B cell (primary cell): ENCODE measurements at regions of chr16 and their contacts with region 1.

Region 1: GRCh38 chr16:81831722-81832126 is 52.6 kb downstream of the PLCG2 start:
- DNase-seq: peak; percentile 88
- ATAC-seq: peak; percentile 75
- H3K4me3 ChIP-seq: peak overlapping the region; percentile 38 to 58 (median 49)
- H3K4me3 Mint-ChIP-seq: peak overlapping the region; percentile 85
- H3K27ac ChIP-seq: peak overlapping the region; percentile 73 to 77
- H3K27ac Mint-ChIP-seq: peak overlapping the region; percentile 90
- H3K4me1 ChIP-seq: peaks cover 94 to 100% of the 10 kb centered on the region in 2 donors
- H3K4me1 Mint-ChIP-seq: peaks cover 92% of the 10 kb centered on the region
- H3K27me3 ChIP-seq: no peaks in the 10 kb centered on the region
- H3K27me3 Mint-ChIP-seq: no peaks in the 10 kb centered on the region
- CTCF ChIP-seq: peak; percentile 60

Region 2: DNA sequence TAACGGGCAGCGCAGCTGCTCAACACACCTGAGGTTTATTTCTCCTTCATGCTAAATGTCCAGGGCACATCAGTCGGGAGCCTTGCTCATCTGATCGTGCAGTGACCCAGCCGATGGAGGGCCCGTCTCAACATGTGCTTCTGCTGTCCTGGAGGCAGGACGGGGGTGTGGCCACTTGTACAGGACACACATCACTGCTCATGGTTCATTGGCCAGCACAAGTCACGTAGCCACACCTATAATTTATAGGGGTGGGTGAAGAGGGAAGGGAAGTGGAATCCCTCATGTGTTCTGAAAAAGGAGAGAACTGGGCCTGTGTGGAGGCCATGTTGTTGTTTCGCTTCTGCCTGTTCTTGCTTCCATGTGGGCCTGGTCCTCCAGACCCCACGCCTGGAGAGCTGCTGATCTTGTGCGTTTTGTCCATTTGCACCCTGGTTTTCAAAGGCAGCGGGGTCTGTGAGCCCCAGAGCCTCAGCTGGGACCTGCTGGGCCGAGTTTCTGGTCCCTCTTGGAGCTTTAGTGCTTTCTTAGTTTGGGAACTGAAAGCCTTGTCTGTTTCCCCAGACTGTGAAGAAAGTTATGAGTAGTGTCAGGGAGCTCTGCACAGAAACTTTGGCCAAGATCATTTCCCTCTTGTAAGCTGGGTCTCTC is 326.6 kb before region 1 on chr16:
- CTCF ChIA-PET with region 1: no interaction called
- POLR2A ChIA-PET with region 1: no interaction called
- intact Hi-C with region 1: loop called (anchors 10 kb)
- DNase-seq: peak; percentile 60
- ATAC-seq: peak; percentile 6
- H3K4me3 ChIP-seq: no peak overlapping the region
- H3K4me3 Mint-ChIP-seq: peak overlapping the region; percentile 70
- H3K27ac ChIP-seq: peak overlapping the region; percentile 88 to 91
- H3K27ac Mint-ChIP-seq: peak overlapping the region; percentile 90
- H3K4me1 ChIP-seq: peaks cover 61 to 64% of the 10 kb centered on the region in 2 donors
- H3K4me1 Mint-ChIP-seq: peaks cover 68% of the 10 kb centered on the region
- H3K27me3 ChIP-seq: no peaks in the 10 kb centered on the region
- H3K27me3 Mint-ChIP-seq: no peaks in the 10 kb centered on the region
- CTCF ChIP-seq: no peak

Region 3: DNA sequence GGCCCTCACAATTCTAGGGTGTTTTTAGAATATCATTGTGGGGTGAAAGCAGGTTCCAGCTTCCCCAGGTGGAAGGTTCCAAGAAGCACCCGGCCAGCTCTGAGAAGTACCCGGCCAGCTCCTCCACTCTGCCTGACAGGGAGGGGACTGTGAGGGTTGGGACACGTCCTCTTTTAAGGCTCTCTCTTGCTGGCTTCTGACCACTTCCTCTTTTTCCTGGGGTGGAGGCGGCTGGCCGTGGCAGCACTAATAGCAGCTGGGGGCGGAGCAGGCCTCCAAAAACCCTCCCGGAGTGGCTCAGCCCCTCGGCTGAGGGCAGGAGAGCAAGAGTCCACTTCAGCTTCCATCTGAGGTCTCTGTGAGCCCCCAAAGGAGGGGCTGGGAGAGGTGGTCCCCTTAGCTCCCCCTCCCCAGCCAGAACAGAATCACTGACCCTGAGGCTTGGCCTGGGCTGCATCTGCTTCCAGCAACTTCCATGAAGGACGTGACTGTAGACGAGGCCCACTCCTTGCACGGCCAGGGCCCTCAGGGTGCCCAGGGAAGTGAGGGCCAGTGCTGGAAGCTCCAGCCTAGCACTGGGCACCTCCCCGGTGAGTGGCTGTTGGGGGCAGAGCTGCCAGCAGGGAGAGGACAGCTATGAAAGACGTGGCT is 79.4 kb before region 1 on chr16:
- CTCF ChIA-PET with region 1: interaction called, 7 read pairs
- POLR2A ChIA-PET with region 1: no interaction called
- intact Hi-C with region 1: loop called (anchors 2 kb)
- DNase-seq: peak; percentile 87
- ATAC-seq: peak; percentile 96
- H3K4me3 ChIP-seq: peak overlapping the region in 4 of 5 experiments; percentile 6 to 58 (median 34)
- H3K4me3 Mint-ChIP-seq: peak overlapping the region; percentile 67
- H3K27ac ChIP-seq: peak overlapping the region; percentile 76 to 87
- H3K27ac Mint-ChIP-seq: peak overlapping the region; percentile 87
- H3K4me1 ChIP-seq: peaks cover 67 to 82% of the 10 kb centered on the region in 2 donors
- H3K4me1 Mint-ChIP-seq: peaks cover 67% of the 10 kb centered on the region
- H3K27me3 ChIP-seq: no peaks in the 10 kb centered on the region
- H3K27me3 Mint-ChIP-seq: no peaks in the 10 kb centered on the region
- CTCF ChIP-seq: no peak

Region 4: DNA sequence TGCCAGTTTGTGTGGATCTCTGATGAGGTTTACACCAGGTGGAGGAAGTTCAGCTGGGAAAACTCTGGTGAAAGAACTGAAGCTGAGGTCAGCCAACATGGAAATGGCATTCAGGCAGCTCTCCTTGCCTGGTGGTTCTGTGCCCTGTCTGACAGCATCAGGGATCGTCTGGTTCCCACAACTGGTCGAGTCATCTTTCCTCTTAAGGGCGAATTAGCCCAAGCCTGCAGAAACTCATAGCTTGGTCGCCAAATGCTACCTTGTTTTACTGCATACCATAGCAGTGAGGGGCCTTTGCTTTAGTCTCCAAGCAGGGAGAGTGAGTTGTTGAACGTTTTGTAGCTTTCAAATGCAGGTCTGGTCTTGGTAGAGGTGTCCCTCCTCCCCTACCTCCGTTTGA is 45.4 kb before region 1 on chr16:
- CTCF ChIA-PET with region 1: interaction called, 6 read pairs
- POLR2A ChIA-PET with region 1: interaction called, 4 read pairs
- intact Hi-C with region 1: loop called (anchors 2 kb)
- DNase-seq: no peak
- ATAC-seq: no peak
- H3K4me3 ChIP-seq: no peak overlapping the region
- H3K4me3 Mint-ChIP-seq: peak overlapping the region; percentile 82
- H3K27ac ChIP-seq: peak overlapping the region; percentile 30 to 74
- H3K27ac Mint-ChIP-seq: peak overlapping the region; percentile 72
- H3K4me1 ChIP-seq: peaks cover 76 to 84% of the 10 kb centered on the region in 2 donors
- H3K4me1 Mint-ChIP-seq: peaks cover 89% of the 10 kb centered on the region
- H3K27me3 ChIP-seq: no peaks in the 10 kb centered on the region
- H3K27me3 Mint-ChIP-seq: no peaks in the 10 kb centered on the region
- CTCF ChIP-seq: no peak

Region 5: DNA sequence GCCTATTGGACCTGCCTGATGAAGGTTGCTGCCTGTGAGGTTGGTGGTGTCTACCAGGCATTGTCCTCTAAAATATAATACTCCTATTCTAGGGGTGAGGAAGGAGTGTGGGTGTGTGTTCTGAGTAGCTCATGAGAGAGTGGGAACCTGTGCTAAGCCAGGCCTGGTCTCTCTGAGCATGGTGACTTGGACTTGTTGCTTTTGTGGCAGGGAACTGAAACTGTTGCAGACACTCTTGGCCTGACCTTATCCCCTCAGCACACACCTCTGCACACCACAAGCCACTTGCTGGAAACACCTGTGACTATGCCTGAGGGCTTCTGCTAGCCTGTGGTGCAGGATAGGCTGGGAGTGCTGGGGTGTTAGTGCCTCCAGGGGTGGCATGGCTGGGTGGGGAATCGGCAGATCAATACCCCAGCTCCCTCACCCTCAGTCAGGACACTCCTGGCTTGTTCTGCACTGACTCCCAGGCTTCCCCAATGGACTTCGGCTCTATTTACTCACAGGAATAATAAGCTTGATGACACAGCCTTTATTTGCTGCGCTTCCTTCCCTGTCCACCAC is 22.7 kb before region 1 on chr16:
- CTCF ChIA-PET with region 1: interaction called, 6 read pairs
- POLR2A ChIA-PET with region 1: interaction called, 11 read pairs
- intact Hi-C with region 1: loop called (anchors 2 kb)
- DNase-seq: peak; percentile 91
- ATAC-seq: peak; percentile 78
- H3K4me3 ChIP-seq: peak overlapping the region in 4 of 5 experiments; percentile 5 to 43 (median 20)
- H3K4me3 Mint-ChIP-seq: peak overlapping the region; percentile 77
- H3K27ac ChIP-seq: peak overlapping the region; percentile 85 to 94
- H3K27ac Mint-ChIP-seq: peak overlapping the region; percentile 97
- H3K4me1 ChIP-seq: peaks cover 87 to 91% of the 10 kb centered on the region in 2 donors
- H3K4me1 Mint-ChIP-seq: peaks cover 96% of the 10 kb centered on the region
- H3K27me3 ChIP-seq: no peaks in the 10 kb centered on the region
- H3K27me3 Mint-ChIP-seq: no peaks in the 10 kb centered on the region
- CTCF ChIP-seq: no peak

Region 6: GRCh38 chr16:81855552-81856153 is 23.9 kb after region 1 on chr16:
- CTCF ChIA-PET with region 1: interaction called, 3 read pairs
- POLR2A ChIA-PET with region 1: interaction called, 14 read pairs
- intact Hi-C with region 1: no loop called
- DNase-seq: no peak
- ATAC-seq: no peak
- H3K4me3 ChIP-seq: no peak overlapping the region
- H3K4me3 Mint-ChIP-seq: no peak overlapping the region
- H3K27ac ChIP-seq: peak overlapping the region in 1 of 2 donors; percentile 47
- H3K27ac Mint-ChIP-seq: peak overlapping the region; percentile 69
- H3K4me1 ChIP-seq: peaks cover 22 to 36% of the 10 kb centered on the region in 2 donors
- H3K4me1 Mint-ChIP-seq: peaks cover 49% of the 10 kb centered on the region
- H3K27me3 ChIP-seq: no peaks in the 10 kb centered on the region
- H3K27me3 Mint-ChIP-seq: no peaks in the 10 kb centered on the region
- CTCF ChIP-seq: no peak